Right ventricle myocardium superior (tissue), 1 donor: ENCODE measurements at regions of chr17 and their contacts with region 1.

Region 1: GRCh38 chr17:55348749-55349354 is 72.8 kb downstream of the MMD start:
- DNase-seq: peak; percentile 52
- ATAC-seq: peak; percentile 87

Region 2: GRCh38 chr17:54992797-54993639 is 355.8 kb before region 1 on chr17:
- intact Hi-C with region 1: loop called (anchors 2 kb)
- DNase-seq: no peak
- ATAC-seq: peak; percentile 60

Region 3: GRCh38 chr17:55053855-55054254 is 295.0 kb before region 1 on chr17:
- intact Hi-C with region 1: loop called (anchors 10 kb)
- DNase-seq: no peak
- ATAC-seq: no peak

Region 4: DNA sequence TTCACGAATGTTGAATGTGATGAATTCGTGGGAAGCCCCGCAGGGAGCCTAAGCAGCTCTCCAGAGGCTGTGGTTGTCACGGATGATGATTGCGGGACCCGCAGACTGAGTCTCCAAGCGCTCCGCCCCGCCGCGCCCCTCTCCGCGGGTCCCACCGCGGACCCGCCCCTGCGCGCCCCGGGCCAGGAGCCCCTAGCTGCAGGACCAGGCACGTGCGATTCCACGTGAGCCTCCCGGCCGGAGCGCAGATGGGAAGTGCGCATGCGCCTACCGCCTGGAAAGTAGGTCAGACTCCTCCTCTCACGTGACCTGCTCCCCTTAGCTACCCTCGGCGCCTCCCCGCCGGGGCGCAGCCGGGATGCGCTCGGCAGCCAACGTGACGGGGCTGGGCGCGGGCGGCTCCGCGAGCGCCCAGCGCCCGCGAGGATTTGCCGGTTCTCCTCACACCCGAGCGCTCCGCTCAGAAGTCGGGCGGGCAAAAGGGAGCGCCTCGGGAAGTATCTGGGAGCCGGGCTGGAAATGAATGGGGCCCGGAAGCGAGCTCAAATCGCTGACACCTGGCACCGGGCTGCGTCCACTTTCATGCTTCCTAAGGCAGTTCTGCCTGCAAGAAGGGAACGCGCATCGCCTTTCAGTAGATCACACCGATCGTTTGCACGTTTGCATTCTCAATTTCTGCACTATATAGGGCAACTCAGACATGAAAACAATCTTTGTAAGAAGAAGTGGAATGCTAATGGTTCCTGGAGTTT is 110.5 kb before region 1 on chr17:
- intact Hi-C with region 1: loop called (anchors 5 kb)
- DNase-seq: peak; percentile 95
- ATAC-seq: peak; percentile 99

Region 5: GRCh38 chr17:55444471-55445441 is 95.9 kb after region 1 on chr17:
- intact Hi-C with region 1: no loop called
- DNase-seq: no peak
- ATAC-seq: no peak